ENCODE measurements at regions of chr21 and their contacts with region 1.

Region 1: DNA sequence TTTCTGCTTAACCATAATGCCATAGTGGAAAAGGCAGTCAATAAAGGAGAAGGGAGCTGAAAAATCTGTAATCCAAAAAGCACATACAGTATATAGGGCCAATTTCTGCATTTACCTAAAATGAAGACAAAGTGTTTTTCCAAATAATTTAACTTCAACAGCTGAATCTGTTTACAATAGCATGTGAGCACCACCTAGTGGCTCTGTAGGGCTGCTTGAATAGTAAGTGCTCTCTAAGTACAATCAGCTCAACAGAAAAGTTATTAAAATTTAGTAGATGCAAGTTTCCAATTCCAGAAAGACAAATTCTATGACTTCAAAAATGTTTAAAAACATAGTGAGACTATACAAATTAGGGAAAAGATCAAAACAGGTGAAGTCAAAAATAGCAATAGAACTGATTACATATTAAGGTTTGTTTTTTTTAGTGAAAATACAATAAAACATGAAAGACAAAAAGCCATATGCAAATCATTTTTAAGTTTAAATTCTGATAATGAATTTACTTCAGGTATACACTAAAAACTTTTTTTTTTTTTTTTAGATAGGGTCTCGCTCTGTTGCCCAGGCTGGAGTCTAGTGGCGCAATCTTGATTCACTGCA is 220.0 kb downstream of the SETD4 start:
- DNase-seq: peak; percentile 20 to 78
- ATAC-seq: peak in 1 of 3 donors; percentile 66
- H3K4me3 ChIP-seq: no peak overlapping the region
- H3K4me3 Mint-ChIP-seq: no peak overlapping the region
- H3K27ac ChIP-seq: no peak overlapping the region
- H3K27ac Mint-ChIP-seq: no peak overlapping the region
- H3K4me1 ChIP-seq: no peaks in the 10 kb centered on the region
- H3K4me1 Mint-ChIP-seq: no peaks in the 10 kb centered on the region
- H3K27me3 ChIP-seq: no peaks in the 10 kb centered on the region
- H3K27me3 Mint-ChIP-seq: peaks cover 2 to 7% of the 10 kb centered on the region in 2 donors
- CTCF ChIP-seq: peak; percentile 81

Region 2: GRCh38 chr21:34688145-34688544 is 1152.2 kb before region 1 on chr21:
- intact Hi-C with region 1: loop called (anchors 1 kb)
- DNase-seq: peak in 1 of 2 donors; percentile 24
- ATAC-seq: peak in 1 of 3 donors; percentile 61
- H3K4me3 ChIP-seq: no peak overlapping the region
- H3K4me3 Mint-ChIP-seq: no peak overlapping the region
- H3K27ac ChIP-seq: no peak overlapping the region
- H3K27ac Mint-ChIP-seq: no peak overlapping the region
- H3K4me1 ChIP-seq: no peaks in the 10 kb centered on the region
- H3K4me1 Mint-ChIP-seq: no peaks in the 10 kb centered on the region
- H3K27me3 ChIP-seq: no peaks in the 10 kb centered on the region
- H3K27me3 Mint-ChIP-seq: peaks cover 14 to 28% of the 10 kb centered on the region in 2 donors
- CTCF ChIP-seq: peak; percentile 57

Region 3: GRCh38 chr21:35873441-35873840 is 33.1 kb after region 1 on chr21:
- intact Hi-C with region 1: no loop called
- DNase-seq: no peak
- ATAC-seq: no peak
- H3K4me3 ChIP-seq: no peak overlapping the region
- H3K4me3 Mint-ChIP-seq: no peak overlapping the region
- H3K27ac ChIP-seq: no peak overlapping the region
- H3K27ac Mint-ChIP-seq: no peak overlapping the region
- H3K4me1 ChIP-seq: no peaks in the 10 kb centered on the region
- H3K4me1 Mint-ChIP-seq: no peaks in the 10 kb centered on the region
- H3K27me3 ChIP-seq: no peaks in the 10 kb centered on the region
- H3K27me3 Mint-ChIP-seq: peaks cover 7 to 30% of the 10 kb centered on the region in 2 donors
- CTCF ChIP-seq: no peak

Measured in natural killer cell (primary cell).